K562 (cell line): ENCODE measurements at regions of chrX and their contacts with region 1.

Region 1: DNA sequence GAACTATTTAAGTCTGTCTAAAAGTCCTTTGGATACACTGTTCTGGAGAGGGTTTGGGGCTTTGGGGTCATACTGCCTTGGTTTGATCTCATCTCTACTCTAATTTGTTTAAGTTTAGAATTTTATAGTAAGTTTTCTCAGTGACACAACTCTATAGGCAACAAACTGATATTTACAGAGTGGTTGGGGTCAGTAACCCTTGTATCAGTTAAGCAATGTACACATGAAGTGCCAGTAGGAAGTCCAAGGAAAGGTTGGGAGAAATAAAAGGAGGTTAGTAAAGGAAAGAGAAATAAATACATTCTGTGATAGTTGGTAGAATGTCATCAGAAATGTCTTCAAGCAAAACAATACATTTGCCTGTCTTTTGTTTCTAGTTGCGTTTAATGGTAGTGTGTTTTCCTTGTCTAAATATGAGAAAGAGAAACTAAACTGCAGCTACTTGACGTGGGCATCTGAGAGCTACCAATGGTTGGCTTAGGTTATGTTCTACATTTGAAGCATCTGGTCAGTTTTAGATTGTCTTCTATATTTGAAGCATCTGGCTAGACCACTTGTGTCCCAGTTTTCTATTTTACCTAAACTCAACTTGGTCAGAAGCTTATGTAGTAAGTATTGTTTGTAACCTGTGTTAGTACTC is 6.9 kb downstream of the ATP7A start:
- DNase-seq: no peak
- ATAC-seq: no peak; the same call in 2 of the 3 replicates
- H3K4me3 ChIP-seq: no peak overlapping the region
- H3K27ac ChIP-seq: peak overlapping the region; percentile 30; the same call in 1 of the 3 replicates
- H3K4me1 ChIP-seq: peaks cover 4 to 5% of the 10 kb centered on the region in 2 experiments; a peak in 3 of 5 replicates
- H3K27me3 ChIP-seq: no peaks in the 10 kb centered on the region
- CTCF ChIP-seq: no peak
- EP300 ChIP-seq: no peak
- POLR2A ChIP-seq: no peak
- RAD21 ChIP-seq: no peak

Region 2: GRCh38 chrX:77937271-77937670 is 19.9 kb after region 1 on chrX:
- CTCF ChIA-PET with region 1: no interaction called
- POLR2A ChIA-PET with region 1: interaction called, 3 read pairs
- in situ Hi-C with region 1: no loop called
- intact Hi-C with region 1: loop called (anchors 2 kb)
- DNase-seq: no peak
- ATAC-seq: no peak
- H3K4me3 ChIP-seq: no peak overlapping the region
- H3K27ac ChIP-seq: peak overlapping the region; percentile 63; the same call in 2 of the 3 replicates
- H3K4me1 ChIP-seq: peaks cover 0 to 6% of the 10 kb centered on the region in 2 experiments; a peak in 2 of 5 replicates
- H3K27me3 ChIP-seq: no peaks in the 10 kb centered on the region
- CTCF ChIP-seq: no peak
- EP300 ChIP-seq: no peak
- POLR2A ChIP-seq: no peak
- RAD21 ChIP-seq: no peak

Region 3: DNA sequence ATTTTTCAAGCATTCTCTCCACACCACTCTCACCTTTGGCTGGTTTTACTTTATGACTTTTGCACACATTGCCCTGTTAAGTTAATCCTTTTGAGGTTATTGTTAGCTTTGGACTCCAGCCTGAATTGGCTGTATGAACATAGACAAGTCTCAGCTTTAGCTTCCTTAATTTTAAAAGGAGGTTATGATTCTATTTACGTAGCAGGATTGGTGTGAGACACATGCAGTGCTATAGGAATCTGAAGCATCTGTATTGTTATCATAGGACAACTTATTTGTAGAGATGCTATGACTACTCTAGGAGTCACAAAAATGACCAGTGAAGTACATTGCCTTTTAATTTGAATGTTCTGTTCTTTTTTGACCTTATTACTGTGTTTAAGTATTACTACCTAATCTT is 36.3 kb after region 1 on chrX:
- CTCF ChIA-PET with region 1: no interaction called
- POLR2A ChIA-PET with region 1: no interaction called
- in situ Hi-C with region 1: no loop called
- intact Hi-C with region 1: loop called (anchors 5 kb)
- DNase-seq: no peak
- ATAC-seq: peak; percentile 56
- H3K4me3 ChIP-seq: no peak overlapping the region
- H3K27ac ChIP-seq: peak overlapping the region; percentile 34
- H3K4me1 ChIP-seq: no peaks in the 10 kb centered on the region; a peak in 1 of 5 replicates
- H3K27me3 ChIP-seq: no peaks in the 10 kb centered on the region
- CTCF ChIP-seq: no peak
- EP300 ChIP-seq: no peak
- POLR2A ChIP-seq: no peak
- RAD21 ChIP-seq: no peak

Region 4: GRCh38 chrX:78109458-78109857 is 192.0 kb after region 1 on chrX:
- CTCF ChIA-PET with region 1: no interaction called
- POLR2A ChIA-PET with region 1: no interaction called
- in situ Hi-C with region 1: no loop called
- intact Hi-C with region 1: loop called (anchors 2 kb)
- DNase-seq: no peak
- ATAC-seq: no peak
- H3K4me3 ChIP-seq: peak overlapping the region; percentile 87; the same call in 1 of the 2 replicates
- H3K27ac ChIP-seq: no peak overlapping the region
- H3K4me1 ChIP-seq: peaks cover 0 to 6% of the 10 kb centered on the region in 2 experiments; a peak in 3 of 5 replicates
- H3K27me3 ChIP-seq: no peaks in the 10 kb centered on the region
- CTCF ChIP-seq: no peak
- EP300 ChIP-seq: no peak
- POLR2A ChIP-seq: no peak
- RAD21 ChIP-seq: no peak